GM13976 (cell line): ENCODE measurements at regions of chr15 and their contacts with region 1.

Region 1: DNA sequence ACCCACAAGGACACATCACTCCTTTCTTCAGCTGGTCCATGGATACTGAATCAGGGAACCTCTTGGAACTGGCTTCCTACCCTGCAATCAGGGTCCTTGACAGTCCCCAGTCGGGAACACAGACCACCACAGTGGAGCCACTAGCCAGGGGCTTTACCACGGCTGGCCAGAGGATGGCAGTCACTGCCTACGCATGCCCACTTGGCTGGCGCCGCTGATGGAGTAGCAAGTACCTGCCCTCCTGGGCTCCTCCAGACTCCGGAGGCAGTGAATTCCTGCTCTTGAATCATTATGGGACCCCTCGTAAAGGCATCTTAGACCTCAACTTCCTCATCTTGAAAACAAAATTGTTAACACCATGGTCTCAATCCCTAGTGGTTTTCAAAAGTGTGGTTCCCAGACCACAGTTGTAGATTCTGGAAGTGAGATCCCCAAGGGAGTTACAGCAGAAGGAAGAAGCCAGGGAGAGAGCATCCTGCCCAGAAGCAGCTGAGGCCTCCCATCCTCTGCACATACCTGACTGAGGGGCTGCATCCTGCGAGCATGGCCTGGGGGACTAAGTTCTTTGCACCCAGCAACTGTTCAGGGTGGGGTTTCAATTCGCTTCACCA is 9.1 kb upstream of the SKIC8 start:
- DNase-seq: peak; percentile 79
- CTCF ChIP-seq: peak; percentile 73

Region 2: DNA sequence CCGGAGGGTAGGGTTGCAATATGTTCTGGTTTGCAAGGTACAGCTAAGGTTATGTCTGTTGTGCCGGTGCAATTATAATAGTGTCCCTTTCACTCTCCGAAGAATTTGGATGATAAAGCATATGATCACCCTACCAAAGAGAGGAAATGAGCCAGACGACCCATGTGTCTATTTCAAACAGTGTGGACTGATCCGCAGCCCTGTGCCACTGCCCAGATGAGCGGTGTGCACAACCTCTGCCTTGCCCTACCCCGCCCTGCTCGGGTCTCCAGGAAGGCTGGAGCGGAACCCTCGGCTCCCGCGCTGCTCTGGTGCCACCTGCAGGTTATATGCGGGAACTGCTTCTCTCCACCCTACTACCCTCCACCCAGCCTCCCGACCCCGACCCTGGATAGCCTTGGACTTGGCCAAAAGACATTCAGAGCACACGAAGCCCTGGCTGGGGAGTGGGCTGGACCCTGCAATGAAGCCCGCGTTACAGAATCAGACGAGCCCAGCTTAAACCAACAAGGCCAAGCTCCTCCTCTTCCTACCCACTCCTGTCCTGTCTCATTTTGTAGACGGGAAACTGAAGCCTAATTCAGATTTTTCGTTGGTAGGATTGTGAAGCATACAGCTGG is 400.8 kb after region 1 on chr15:
- in situ Hi-C with region 1: loop called (anchors 25 kb)
- DNase-seq: peak; percentile 71
- CTCF ChIP-seq: peak; percentile 78